Naive thymus-derived CD4-positive, alpha-beta T cell (primary cell): ENCODE measurements at regions of chr10 and their contacts with region 1.

Region 1: DNA sequence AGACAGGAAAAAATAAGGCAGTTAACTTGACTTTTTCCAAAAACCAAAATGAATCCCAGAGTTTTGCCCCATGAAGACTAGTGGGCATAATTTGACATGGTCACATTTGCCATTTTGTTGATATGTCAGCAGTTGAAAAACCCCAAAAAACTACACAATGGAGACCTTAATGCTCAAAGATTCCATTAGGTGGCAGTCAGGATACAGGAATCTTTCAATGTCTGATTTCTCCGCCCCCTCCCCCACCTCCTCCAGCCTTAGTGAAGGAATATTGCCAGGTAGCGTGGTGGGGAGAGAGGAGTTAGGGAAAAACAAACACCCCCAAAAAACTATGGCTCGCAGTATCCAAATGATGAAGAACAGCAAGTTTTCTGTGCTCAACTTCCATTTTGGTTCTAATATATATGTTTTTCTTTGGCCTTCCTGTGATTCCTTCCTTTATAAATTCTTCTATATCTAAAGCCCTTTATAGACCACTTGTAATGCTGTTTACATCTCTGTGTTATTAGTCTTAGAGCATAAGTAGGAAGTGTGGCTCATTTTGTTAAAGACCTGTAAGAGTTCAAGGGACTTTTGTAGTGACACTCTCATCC is 6.7 kb upstream of the SMNDC1 start:
- DNase-seq: peak in 6 of 9 donors; percentile 19 to 44 (median 28)
- ATAC-seq: peak; percentile 81
- H3K4me3 ChIP-seq: no peak overlapping the region
- H3K4me3 Mint-ChIP-seq: no peak overlapping the region
- H3K27ac ChIP-seq: no peak overlapping the region
- H3K27ac Mint-ChIP-seq: no peak overlapping the region
- H3K4me1 ChIP-seq: peaks cover 0 to 4% of the 10 kb centered on the region in 2 donors
- H3K4me1 Mint-ChIP-seq: peaks cover 0 to 27% (median under 1%) of the 10 kb centered on the region in 7 donors
- H3K27me3 ChIP-seq: no peaks in the 10 kb centered on the region
- H3K27me3 Mint-ChIP-seq: peaks cover 0 to 4% (median 0%) of the 10 kb centered on the region in 5 donors

Region 2: DNA sequence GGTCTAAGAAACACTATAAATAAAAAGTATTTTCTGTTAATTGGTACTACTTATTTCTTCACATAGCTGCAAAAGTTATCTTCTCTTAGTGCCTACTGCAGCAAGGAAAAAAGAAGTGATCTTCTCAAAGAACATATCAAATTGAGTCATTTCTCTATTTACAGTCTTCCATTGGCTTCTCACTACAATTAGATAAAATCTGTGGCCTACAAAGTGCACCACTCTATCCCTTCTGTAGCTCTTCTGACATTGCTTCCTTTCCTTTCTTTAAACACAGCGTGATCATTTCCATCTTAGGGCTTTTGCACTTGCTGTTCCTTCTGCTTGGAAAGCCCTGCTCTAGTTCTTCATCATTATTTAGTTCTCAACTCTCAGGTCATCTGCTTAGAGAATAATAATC is 59.3 kb before region 1 on chr10:
- CTCF ChIA-PET with region 1: no interaction called
- POLR2A ChIA-PET with region 1: no interaction called
- intact Hi-C with region 1: no loop called
- DNase-seq: no peak
- ATAC-seq: no peak
- H3K4me3 ChIP-seq: no peak overlapping the region
- H3K4me3 Mint-ChIP-seq: no peak overlapping the region
- H3K27ac ChIP-seq: no peak overlapping the region
- H3K27ac Mint-ChIP-seq: peak overlapping the region in 1 of 9 donors; percentile 23
- H3K4me1 ChIP-seq: peaks cover 0 to 6% of the 10 kb centered on the region in 2 donors
- H3K4me1 Mint-ChIP-seq: peaks cover 16 to 42% (median 28%) of the 10 kb centered on the region in 7 donors
- H3K27me3 ChIP-seq: no peaks in the 10 kb centered on the region
- H3K27me3 Mint-ChIP-seq: peaks cover 0 to 33% (median 0%) of the 10 kb centered on the region in 5 donors

Region 3: DNA sequence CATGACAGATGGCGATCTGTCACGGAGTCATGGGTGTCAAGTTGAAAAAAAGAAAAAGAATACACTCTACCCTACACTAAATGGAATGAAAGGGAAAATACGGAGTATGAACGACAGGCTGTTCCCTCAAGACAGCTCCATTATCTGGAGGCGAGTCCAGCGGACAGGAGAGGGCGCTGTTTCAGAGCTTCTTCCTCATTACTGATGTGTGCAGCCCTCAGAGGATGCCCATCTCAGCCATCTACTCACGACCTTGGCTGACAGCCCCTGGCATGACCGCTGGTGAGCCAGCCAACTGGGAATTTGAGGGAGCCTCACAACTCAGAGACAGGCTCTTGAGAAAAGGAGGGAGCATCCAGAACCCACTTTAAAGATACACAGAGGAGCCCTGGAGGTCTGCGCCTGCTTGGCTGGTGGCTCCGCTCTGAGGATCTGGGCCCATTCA is 42.9 kb after region 1 on chr10:
- CTCF ChIA-PET with region 1: interaction called, 8 read pairs
- POLR2A ChIA-PET with region 1: no interaction called
- intact Hi-C with region 1: loop called (anchors 1 kb)
- DNase-seq: peak in 8 of 9 donors; percentile 49 to 75 (median 58)
- ATAC-seq: peak; percentile 73
- H3K4me3 ChIP-seq: no peak overlapping the region
- H3K4me3 Mint-ChIP-seq: peak overlapping the region in 6 of 10 donors; percentile 17 to 48 (median 25)
- H3K27ac ChIP-seq: no peak overlapping the region
- H3K27ac Mint-ChIP-seq: peak overlapping the region in 7 of 9 donors; percentile 14 to 97 (median 53)
- H3K4me1 ChIP-seq: peaks cover 43 to 47% of the 10 kb centered on the region in 2 donors
- H3K4me1 Mint-ChIP-seq: peaks cover 33 to 57% (median 50%) of the 10 kb centered on the region in 7 donors
- H3K27me3 ChIP-seq: no peaks in the 10 kb centered on the region
- H3K27me3 Mint-ChIP-seq: no peaks in the 10 kb centered on the region

Region 4: GRCh38 chr10:110425684-110426293 is 114.3 kb after region 1 on chr10:
- CTCF ChIA-PET with region 1: no interaction called
- POLR2A ChIA-PET with region 1: no interaction called
- intact Hi-C with region 1: loop called in 1 of 2 experiments (anchors 5 kb)
- DNase-seq: peak in 1 of 9 donors; percentile 64
- ATAC-seq: peak; percentile 78
- H3K4me3 ChIP-seq: no peak overlapping the region
- H3K4me3 Mint-ChIP-seq: peak overlapping the region in 1 of 10 donors; percentile 26
- H3K27ac ChIP-seq: no peak overlapping the region
- H3K27ac Mint-ChIP-seq: peak overlapping the region in 1 of 9 donors; percentile 75
- H3K4me1 ChIP-seq: peaks cover 0 to 8% of the 10 kb centered on the region in 2 donors
- H3K4me1 Mint-ChIP-seq: peaks cover 0 to 43% (median 9%) of the 10 kb centered on the region in 7 donors
- H3K27me3 ChIP-seq: no peaks in the 10 kb centered on the region
- H3K27me3 Mint-ChIP-seq: no peaks in the 10 kb centered on the region

Region 5: DNA sequence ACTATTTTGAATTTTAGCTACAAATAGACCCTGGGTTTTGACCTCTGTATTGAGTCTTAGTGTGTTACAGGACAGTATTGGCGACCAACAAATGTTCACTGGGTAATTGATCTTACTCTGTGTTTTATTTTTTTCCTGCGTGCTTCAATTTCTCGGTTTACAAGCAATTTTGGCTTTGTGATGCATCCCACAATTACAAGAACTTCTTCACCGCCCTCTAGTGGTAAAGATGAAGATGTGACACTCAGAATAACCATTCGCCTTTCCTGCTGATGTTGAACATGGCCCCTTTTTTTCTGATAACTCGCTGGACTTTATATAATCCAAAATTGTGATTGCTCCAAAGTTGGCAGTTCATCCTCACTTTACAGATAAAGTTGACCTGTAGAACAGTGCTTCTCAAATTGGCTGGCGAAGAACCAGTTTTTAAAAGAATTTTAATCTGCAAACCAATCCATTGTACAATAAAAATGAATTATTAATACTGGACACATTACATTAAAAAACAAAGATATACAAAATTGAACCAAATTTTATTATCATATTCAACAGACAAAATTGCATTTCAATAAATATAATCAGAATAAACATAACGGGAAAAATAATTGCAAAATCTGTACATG is 235.8 kb after region 1 on chr10:
- CTCF ChIA-PET with region 1: interaction called, 78 read pairs
- POLR2A ChIA-PET with region 1: interaction called, 10 read pairs
- intact Hi-C with region 1: loop called (anchors 1 kb)
- DNase-seq: peak in 7 of 9 donors; percentile 40 to 75 (median 68)
- ATAC-seq: peak; percentile 85
- H3K4me3 ChIP-seq: no peak overlapping the region
- H3K4me3 Mint-ChIP-seq: peak overlapping the region in 1 of 10 donors; percentile 2
- H3K27ac ChIP-seq: no peak overlapping the region
- H3K27ac Mint-ChIP-seq: peak overlapping the region in 2 of 9 donors; percentile 3 to 6
- H3K4me1 ChIP-seq: peaks cover 0 to 5% of the 10 kb centered on the region in 2 donors
- H3K4me1 Mint-ChIP-seq: peaks cover 3 to 16% (median 5%) of the 10 kb centered on the region in 7 donors
- H3K27me3 ChIP-seq: no peaks in the 10 kb centered on the region
- H3K27me3 Mint-ChIP-seq: peaks cover 0 to 39% (median 11%) of the 10 kb centered on the region in 5 donors

Region 6: DNA sequence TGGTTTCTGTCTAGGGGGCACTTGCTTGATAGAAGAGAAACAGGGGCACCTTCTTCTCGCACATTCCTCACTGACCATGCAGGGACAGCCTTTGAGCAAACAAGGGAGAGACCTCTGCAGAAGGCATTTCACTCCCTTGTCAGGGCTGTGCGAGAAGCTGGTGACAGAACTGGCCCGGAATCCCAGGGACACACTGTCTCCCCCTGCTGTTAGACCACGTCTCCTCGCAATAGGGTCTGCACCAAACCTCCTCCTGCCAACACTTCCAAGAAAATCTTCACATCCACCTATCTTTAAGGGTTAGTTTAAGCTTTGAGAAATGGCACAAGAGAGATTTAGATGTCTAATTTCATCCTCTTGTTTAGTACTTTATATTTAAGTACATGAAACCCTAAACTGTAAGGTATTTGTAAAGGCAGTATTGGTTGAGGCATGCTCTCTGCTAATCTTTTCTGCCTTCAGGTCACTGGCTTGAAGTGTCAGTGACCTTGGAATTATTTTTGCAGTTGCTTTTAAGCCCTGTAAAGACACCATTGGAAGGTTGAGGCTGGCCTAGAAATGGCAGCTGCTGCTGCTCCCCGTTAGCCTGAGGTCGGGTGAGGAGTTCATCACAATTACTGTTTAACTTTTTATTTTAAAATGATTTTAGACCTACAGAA is 369.7 kb after region 1 on chr10:
- CTCF ChIA-PET with region 1: no interaction called
- POLR2A ChIA-PET with region 1: no interaction called
- intact Hi-C with region 1: loop called (anchors 1 to 2 kb)
- DNase-seq: peak in 3 of 9 donors; percentile 7 to 27 (median 11)
- ATAC-seq: peak; percentile 51
- H3K4me3 ChIP-seq: no peak overlapping the region
- H3K4me3 Mint-ChIP-seq: no peak overlapping the region
- H3K27ac ChIP-seq: no peak overlapping the region
- H3K27ac Mint-ChIP-seq: peak overlapping the region in 2 of 9 donors; percentile 13 to 38
- H3K4me1 ChIP-seq: no peaks in the 10 kb centered on the region
- H3K4me1 Mint-ChIP-seq: peaks cover 0 to 10% (median 3%) of the 10 kb centered on the region in 7 donors
- H3K27me3 ChIP-seq: no peaks in the 10 kb centered on the region
- H3K27me3 Mint-ChIP-seq: peaks cover 0 to 37% (median 12%) of the 10 kb centered on the region in 5 donors

Region 7: DNA sequence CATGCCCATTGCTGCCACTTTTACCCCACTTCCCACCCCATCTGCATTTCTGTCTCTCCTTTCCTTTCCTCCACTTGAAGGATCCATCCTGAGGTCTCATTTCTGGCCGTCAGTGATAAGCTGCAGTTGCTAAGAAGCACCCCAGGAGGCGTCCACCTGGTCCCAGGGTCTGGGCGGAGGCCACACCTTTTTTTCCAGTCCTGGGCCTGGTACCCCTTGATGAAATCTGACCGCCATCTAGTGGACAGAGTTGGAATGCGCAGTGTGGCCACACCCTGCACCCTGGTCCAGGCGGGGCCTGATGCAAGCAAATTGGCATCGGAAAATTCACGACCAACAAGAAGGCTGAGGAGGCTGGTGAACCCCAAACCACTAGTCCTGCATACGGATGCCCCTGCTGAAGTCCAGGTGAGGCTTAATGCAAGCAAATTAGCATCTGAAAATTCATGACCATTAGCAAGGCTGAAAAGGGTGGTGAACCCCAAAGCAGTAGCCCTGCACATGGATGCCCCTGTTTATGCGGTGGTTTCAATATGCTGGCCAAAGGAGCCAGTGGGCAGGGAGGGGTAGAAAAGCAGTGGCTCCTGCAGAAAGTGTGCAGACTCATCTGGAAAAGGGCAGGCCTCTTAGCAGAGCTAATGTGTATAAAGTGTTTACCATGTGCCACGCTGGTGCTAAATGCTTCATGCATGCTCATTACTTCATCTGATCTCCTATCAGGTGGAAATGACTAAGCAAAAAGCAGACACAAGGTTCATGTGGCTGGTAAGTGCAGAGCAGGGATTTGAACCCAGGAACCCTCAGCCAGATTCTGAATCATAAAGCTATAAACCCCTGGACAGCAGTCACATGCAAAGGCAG is 1828.9 kb after region 1 on chr10:
- CTCF ChIA-PET with region 1: no interaction called
- POLR2A ChIA-PET with region 1: no interaction called
- intact Hi-C with region 1: loop called in 1 of 2 experiments (anchors 2 kb)
- DNase-seq: peak; percentile 15 to 72 (median 43)
- ATAC-seq: peak; percentile 87
- H3K4me3 ChIP-seq: no peak overlapping the region
- H3K4me3 Mint-ChIP-seq: no peak overlapping the region
- H3K27ac ChIP-seq: no peak overlapping the region
- H3K27ac Mint-ChIP-seq: no peak overlapping the region
- H3K4me1 ChIP-seq: no peaks in the 10 kb centered on the region
- H3K4me1 Mint-ChIP-seq: peaks cover 0 to 4% (median 0%) of the 10 kb centered on the region in 7 donors
- H3K27me3 ChIP-seq: no peaks in the 10 kb centered on the region
- H3K27me3 Mint-ChIP-seq: peaks cover 0 to 9% (median 0%) of the 10 kb centered on the region in 5 donors